GM12878 (cell line): ENCODE measurements at regions of chr11 and their contacts with region 1.

Region 1: GRCh38 chr11:33065445-33066178 is 26.2 kb downstream of the TCP11L1 start:
- DNase-seq: no peak
- ATAC-seq: peak; percentile 84
- H3K4me3 ChIP-seq: no peak overlapping the region
- H3K27ac ChIP-seq: no peak overlapping the region
- H3K4me1 ChIP-seq: peaks cover 40% of the 10 kb centered on the region
- H3K27me3 ChIP-seq: no peaks in the 10 kb centered on the region
- CTCF ChIP-seq: peak; percentile 88 to 94 (median 91); a peak in 5 of 6 replicates
- EP300 ChIP-seq: no peak
- POLR2A ChIP-seq: no peak
- RAD21 ChIP-seq: peak; percentile 87

Region 2: GRCh38 chr11:32775908-32776307 is 289.7 kb before region 1 on chr11:
- CTCF ChIA-PET with region 1: no interaction called
- POLR2A ChIA-PET with region 1: interaction called, 11 read pairs
- RAD21 ChIA-PET with region 1: no interaction called
- SMC1A ChIA-PET with region 1: interaction called, 4 read pairs
- in situ Hi-C with region 1: no loop called
- intact Hi-C with region 1: no loop called
- DNase-seq: no peak
- ATAC-seq: peak; percentile 86
- H3K4me3 ChIP-seq: peak overlapping the region; percentile 4; the same call in 1 of the 2 replicates
- H3K27ac ChIP-seq: peak overlapping the region; percentile 31
- H3K4me1 ChIP-seq: no peaks in the 10 kb centered on the region
- H3K27me3 ChIP-seq: no peaks in the 10 kb centered on the region
- CTCF ChIP-seq: no peak
- EP300 ChIP-seq: no peak
- POLR2A ChIP-seq: no peak
- RAD21 ChIP-seq: no peak

Region 3: DNA sequence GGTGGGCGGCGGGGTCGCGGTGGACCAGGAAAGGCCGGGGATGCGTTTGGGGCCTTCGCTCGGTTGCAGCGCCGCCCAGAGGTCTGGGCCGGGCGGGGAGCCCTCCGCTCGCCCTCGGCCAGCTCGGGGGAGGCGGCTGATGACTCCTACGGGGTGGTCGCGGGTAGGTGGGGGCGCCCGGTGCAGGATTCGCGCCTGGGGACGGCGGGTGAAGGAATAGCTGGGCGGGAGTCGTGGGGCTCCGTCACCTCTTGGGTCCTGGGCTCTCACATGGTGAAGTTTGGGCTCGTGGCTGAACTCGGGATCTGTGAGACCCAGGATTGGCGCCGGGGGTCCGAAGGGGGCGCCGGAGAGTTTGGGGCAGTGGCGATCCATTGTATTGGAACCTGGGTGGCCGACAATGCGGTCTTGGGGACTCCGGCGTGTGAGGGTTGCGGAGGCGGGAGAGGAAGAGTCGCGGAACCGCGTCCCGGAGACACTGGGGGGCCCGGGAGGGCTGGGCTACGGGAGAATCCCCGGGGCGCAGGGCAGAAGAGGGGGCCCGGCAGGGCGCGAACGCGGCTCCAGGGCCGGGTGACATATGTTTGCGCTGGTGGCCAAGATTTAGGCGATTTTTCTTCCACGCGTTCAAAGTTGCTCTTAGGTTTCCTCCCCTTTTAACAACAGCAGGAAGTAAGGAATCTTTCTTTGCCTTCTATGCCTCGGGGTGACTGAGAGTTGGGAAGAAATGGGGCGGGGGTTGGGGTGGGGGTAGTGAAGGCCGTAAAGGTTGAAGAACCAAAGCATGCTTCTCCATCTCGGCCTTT is 172.1 kb before region 1 on chr11:
- CTCF ChIA-PET with region 1: interaction called, 34 read pairs
- POLR2A ChIA-PET with region 1: interaction called, 5 read pairs
- RAD21 ChIA-PET with region 1: interaction called, 27 read pairs
- SMC1A ChIA-PET with region 1: interaction called, 47 read pairs
- in situ Hi-C with region 1: no loop called
- intact Hi-C with region 1: loop called (anchors 5 kb)
- DNase-seq: no peak
- ATAC-seq: peak; percentile 59
- H3K4me3 ChIP-seq: peak overlapping the region; percentile 91
- H3K27ac ChIP-seq: peak overlapping the region; percentile 87
- H3K4me1 ChIP-seq: peaks cover 7% of the 10 kb centered on the region; the same call in 1 of the 2 replicates
- H3K27me3 ChIP-seq: no peaks in the 10 kb centered on the region
- CTCF ChIP-seq: peak; percentile 43 to 49 (median 45)
- EP300 ChIP-seq: no peak
- POLR2A ChIP-seq: peak; percentile 71; the same call in 1 of the 2 replicates
- RAD21 ChIP-seq: peak; percentile 16; the same call in 1 of the 2 replicates

Region 4: GRCh38 chr11:32968541-32968940 is 97.1 kb before region 1 on chr11:
- CTCF ChIA-PET with region 1: interaction called, 60 read pairs
- POLR2A ChIA-PET with region 1: interaction called, 4 read pairs
- RAD21 ChIA-PET with region 1: interaction called, 144 read pairs
- SMC1A ChIA-PET with region 1: interaction called, 72 read pairs
- in situ Hi-C with region 1: no loop called
- intact Hi-C with region 1: no loop called
- DNase-seq: no peak
- ATAC-seq: no peak
- H3K4me3 ChIP-seq: no peak overlapping the region
- H3K27ac ChIP-seq: no peak overlapping the region
- H3K4me1 ChIP-seq: no peaks in the 10 kb centered on the region
- H3K27me3 ChIP-seq: no peaks in the 10 kb centered on the region
- CTCF ChIP-seq: no peak
- EP300 ChIP-seq: no peak
- POLR2A ChIP-seq: no peak
- RAD21 ChIP-seq: no peak

Region 5: GRCh38 chr11:33033493-33033892 is 32.1 kb before region 1 on chr11:
- CTCF ChIA-PET with region 1: interaction called, 24 read pairs
- POLR2A ChIA-PET with region 1: interaction called, 3 read pairs
- RAD21 ChIA-PET with region 1: interaction called, 53 read pairs
- SMC1A ChIA-PET with region 1: interaction called, 35 read pairs
- in situ Hi-C with region 1: no loop called
- intact Hi-C with region 1: no loop called
- DNase-seq: no peak
- ATAC-seq: no peak
- H3K4me3 ChIP-seq: no peak overlapping the region
- H3K27ac ChIP-seq: no peak overlapping the region
- H3K4me1 ChIP-seq: no peaks in the 10 kb centered on the region
- H3K27me3 ChIP-seq: no peaks in the 10 kb centered on the region; a peak in 1 of 4 replicates
- CTCF ChIP-seq: no peak
- EP300 ChIP-seq: no peak
- POLR2A ChIP-seq: no peak
- RAD21 ChIP-seq: no peak

Region 6: GRCh38 chr11:33161120-33162005 is 95.8 kb after region 1 on chr11 and contains the start of gene CSTF3:
- CTCF ChIA-PET with region 1: interaction called, 8 read pairs
- POLR2A ChIA-PET with region 1: no interaction called
- RAD21 ChIA-PET with region 1: interaction called, 4 read pairs
- SMC1A ChIA-PET with region 1: interaction called, 13 read pairs
- in situ Hi-C with region 1: no loop called
- intact Hi-C with region 1: no loop called
- DNase-seq: peak; percentile 74
- ATAC-seq: peak; percentile 92
- H3K4me3 ChIP-seq: peak within 1 kb of the TSS; percentile 91
- H3K27ac ChIP-seq: peak within 1 kb of the TSS; percentile 97
- H3K4me1 ChIP-seq: no peaks in the 10 kb centered on the region
- H3K27me3 ChIP-seq: no peaks in the 10 kb centered on the region
- CTCF ChIP-seq: peak; percentile 19 to 23 (median 19); a peak in 3 of 6 replicates
- EP300 ChIP-seq: no peak; a peak in 1 of 4 replicates
- POLR2A ChIP-seq: peak; percentile 80
- RAD21 ChIP-seq: no peak
- polyA plus RNA-seq, gene CSTF3: 42.0 to 50.1 TPM

Region 7: DNA sequence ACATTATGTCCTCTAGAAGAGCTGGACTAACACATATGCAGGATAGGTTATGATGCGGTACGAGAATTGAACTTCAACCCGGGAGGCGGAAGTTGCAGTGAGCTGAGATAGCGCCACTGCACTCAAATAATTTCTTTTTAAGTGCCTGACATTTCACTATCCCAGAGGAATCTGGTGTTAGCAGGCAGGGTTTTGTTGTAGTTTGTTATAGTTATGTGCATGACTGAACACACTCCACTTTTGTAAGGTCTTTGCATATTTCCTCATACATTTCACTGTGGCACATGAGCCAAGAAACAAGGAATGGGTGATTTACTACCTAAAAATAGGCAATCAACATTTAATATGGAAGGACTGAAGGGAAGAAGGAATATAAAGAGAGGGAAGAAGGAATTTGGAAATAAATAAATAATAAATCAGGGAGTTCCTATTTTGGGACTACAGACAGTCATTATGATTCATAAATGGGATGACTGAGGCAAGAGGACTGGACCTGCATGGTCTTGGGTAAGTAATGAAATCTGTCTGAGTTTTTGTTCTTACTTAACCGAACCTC is 182.9 kb after region 1 on chr11:
- CTCF ChIA-PET with region 1: no interaction called
- POLR2A ChIA-PET with region 1: no interaction called
- RAD21 ChIA-PET with region 1: no interaction called
- SMC1A ChIA-PET with region 1: no interaction called
- in situ Hi-C with region 1: no loop called
- intact Hi-C with region 1: no loop called
- DNase-seq: no peak
- ATAC-seq: no peak
- H3K4me3 ChIP-seq: no peak overlapping the region
- H3K27ac ChIP-seq: no peak overlapping the region
- H3K4me1 ChIP-seq: no peaks in the 10 kb centered on the region
- H3K27me3 ChIP-seq: no peaks in the 10 kb centered on the region
- CTCF ChIP-seq: no peak
- EP300 ChIP-seq: no peak
- POLR2A ChIP-seq: no peak
- RAD21 ChIP-seq: no peak